Activated CD8-positive, alpha-beta T cell treated with anti-CD3 and anti-CD28 coated beads for 36 hours (primary cell): ENCODE measurements at regions of chr22 and their contacts with region 1.

Region 1: GRCh38 chr22:37817705-37818408 is 5.3 kb upstream of the GALR3 start:
- DNase-seq: peak; percentile 83
- ATAC-seq: peak; percentile 84
- H3K4me3 Mint-ChIP-seq: no peak overlapping the region
- H3K27ac Mint-ChIP-seq: no peak overlapping the region
- H3K4me1 Mint-ChIP-seq: peaks cover 10% of the 10 kb centered on the region
- H3K27me3 Mint-ChIP-seq: peaks cover 20% of the 10 kb centered on the region
- CTCF ChIP-seq: peak; percentile 97

Region 2: DNA sequence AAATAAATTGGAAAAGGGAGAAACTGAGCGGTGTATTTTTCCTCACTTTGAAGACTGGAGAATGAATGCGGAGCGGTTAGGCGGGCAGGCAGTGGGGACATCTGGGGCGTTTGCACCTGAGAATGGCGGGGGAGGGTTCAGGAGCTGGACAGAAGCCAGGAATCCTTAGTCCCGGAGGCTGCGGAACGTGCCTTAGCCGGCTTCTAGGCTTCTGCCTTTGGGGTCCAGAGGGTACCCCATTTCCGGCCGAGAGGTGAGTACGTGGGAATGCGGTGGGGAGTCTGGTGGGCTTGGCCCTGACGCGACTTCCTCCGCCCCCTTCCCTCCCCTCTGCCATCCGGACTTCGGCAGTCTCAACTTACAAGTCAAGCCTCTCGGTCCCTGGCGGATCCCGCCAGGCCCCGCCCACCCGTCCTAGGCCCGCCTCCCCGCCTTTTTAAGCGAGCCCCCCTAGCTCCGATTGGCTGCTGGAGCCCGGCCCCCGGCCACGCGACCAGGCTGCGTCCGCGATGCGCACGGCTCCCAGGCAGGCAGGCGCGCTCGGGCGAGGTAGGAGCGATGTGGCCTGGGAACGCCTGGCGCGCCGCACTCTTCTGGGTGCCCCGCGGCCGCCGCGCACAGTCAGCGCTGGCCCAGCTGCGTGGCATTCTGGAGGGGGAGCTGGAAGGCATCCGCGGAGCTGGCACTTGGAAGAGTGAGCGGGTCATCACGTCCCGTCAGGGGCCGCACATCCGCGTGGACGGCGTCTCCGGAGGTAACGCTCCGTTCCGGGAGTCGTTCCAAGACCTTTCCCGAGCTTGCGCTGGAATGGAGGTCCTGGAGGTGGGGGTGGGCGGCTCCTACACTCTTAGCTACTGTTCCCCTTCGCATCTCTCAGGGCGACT is 10.2 kb before region 1 on chr22 and contains the start of gene GCAT:
- CTCF ChIA-PET with region 1: interaction called, 73 read pairs
- POLR2A ChIA-PET with region 1: interaction called, 6 read pairs
- intact Hi-C with region 1: no loop called
- DNase-seq: peak; percentile 96
- ATAC-seq: peak; percentile 98
- H3K4me3 Mint-ChIP-seq: peak within 1 kb of the TSS; percentile 77
- H3K27ac Mint-ChIP-seq: no peak within 1 kb of the TSS
- H3K4me1 Mint-ChIP-seq: peaks cover 33% of the 10 kb centered on the region
- H3K27me3 Mint-ChIP-seq: peaks cover 54% of the 10 kb centered on the region
- CTCF ChIP-seq: no peak
- total RNA-seq, gene GCAT: 19.0 to 20.4 TPM

Region 3: GRCh38 chr22:37843741-37843990 is 25.8 kb after region 1 on chr22:
- CTCF ChIA-PET with region 1: interaction called, 10 read pairs
- POLR2A ChIA-PET with region 1: interaction called, 6 read pairs
- intact Hi-C with region 1: no loop called
- DNase-seq: peak; percentile 62
- ATAC-seq: peak; percentile 38
- H3K4me3 Mint-ChIP-seq: peak overlapping the region; percentile 89
- H3K27ac Mint-ChIP-seq: peak overlapping the region; percentile 87
- H3K4me1 Mint-ChIP-seq: peaks cover 21% of the 10 kb centered on the region
- H3K27me3 Mint-ChIP-seq: no peaks in the 10 kb centered on the region
- CTCF ChIP-seq: no peak

Region 4: DNA sequence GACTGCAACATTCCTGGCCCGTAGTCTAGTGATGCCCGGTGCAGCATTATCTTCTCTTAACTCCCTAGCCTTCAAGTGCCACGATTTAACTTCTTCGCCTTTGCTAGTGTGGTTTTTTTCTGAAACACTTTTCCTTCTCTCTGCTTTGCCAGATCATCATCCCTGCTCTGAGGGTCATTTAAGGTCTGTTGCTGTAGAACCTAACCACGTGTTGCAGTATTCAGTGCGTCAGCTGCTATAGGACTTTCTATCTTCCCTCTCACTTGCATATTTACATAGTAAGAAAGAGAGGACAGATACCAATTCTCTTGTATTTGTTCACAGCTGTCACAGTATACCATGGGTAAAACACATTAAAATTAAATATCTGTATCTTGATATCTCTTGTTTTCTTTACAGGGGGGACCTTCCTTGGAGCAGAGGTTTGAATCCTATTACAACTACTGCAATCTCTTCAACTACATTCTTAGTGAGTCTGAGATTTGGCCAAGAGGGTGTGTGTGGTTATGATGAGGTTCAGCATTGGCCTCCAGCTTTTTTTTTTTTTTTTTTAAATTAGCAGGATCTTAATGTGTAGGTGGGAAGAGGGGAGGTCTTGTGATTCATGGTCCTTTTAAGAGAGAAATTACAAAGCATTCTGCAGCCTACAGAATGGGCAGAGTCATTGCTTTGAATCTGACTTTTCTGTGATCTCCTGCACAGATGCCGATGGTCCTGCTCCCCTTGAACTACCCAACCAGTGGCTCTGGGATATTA is 44.9 kb after region 1 on chr22:
- CTCF ChIA-PET with region 1: interaction called, 89 read pairs
- POLR2A ChIA-PET with region 1: interaction called, 4 read pairs
- intact Hi-C with region 1: loop called (anchors 5 kb)
- DNase-seq: no peak
- ATAC-seq: no peak
- H3K4me3 Mint-ChIP-seq: no peak overlapping the region
- H3K27ac Mint-ChIP-seq: peak overlapping the region; percentile 39
- H3K4me1 Mint-ChIP-seq: peaks cover 9% of the 10 kb centered on the region
- H3K27me3 Mint-ChIP-seq: no peaks in the 10 kb centered on the region
- CTCF ChIP-seq: no peak

Region 5: DNA sequence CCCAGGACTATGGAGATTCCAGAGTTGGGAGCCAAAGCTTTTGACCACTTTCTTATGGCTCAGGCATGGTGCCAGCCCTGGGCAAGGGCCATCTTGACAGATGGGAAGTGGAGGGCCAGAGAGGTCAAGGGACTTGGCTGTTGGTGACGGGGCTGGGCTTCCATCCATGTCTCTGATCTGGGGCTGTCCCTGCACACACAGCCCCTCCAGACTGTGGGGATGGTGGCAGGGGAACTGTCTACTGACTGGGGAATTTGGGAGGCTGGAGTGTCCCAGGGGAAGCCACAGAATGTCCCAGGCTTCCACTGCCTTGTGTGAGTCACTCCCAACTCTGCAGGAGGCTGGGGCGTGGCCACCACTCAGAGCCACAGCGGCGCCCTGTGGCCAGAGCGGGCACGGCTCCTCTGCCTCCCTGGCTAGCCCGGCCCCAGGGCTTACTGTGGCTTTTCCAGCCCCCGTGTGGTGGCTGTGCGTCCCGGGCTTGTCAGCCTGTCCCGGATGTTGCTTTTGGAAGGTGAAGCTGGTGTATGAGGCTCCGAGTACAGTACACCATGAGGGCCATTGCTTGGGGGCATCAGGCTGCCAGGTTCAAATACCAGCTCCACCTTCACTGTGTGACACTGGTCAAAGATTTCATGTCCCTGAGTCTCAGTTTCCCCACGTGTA is 116.0 kb after region 1 on chr22:
- CTCF ChIA-PET with region 1: interaction called, 13 read pairs
- POLR2A ChIA-PET with region 1: no interaction called
- intact Hi-C with region 1: loop called (anchors 5 kb)
- DNase-seq: peak; percentile 92
- ATAC-seq: peak; percentile 100
- H3K4me3 Mint-ChIP-seq: no peak overlapping the region
- H3K27ac Mint-ChIP-seq: peak overlapping the region; percentile 25
- H3K4me1 Mint-ChIP-seq: peaks cover 9% of the 10 kb centered on the region
- H3K27me3 Mint-ChIP-seq: no peaks in the 10 kb centered on the region
- CTCF ChIP-seq: peak; percentile 96